CD4-positive, alpha-beta T cell (primary cell): ENCODE measurements at regions of chr19 and their contacts with region 1.

Region 1: DNA sequence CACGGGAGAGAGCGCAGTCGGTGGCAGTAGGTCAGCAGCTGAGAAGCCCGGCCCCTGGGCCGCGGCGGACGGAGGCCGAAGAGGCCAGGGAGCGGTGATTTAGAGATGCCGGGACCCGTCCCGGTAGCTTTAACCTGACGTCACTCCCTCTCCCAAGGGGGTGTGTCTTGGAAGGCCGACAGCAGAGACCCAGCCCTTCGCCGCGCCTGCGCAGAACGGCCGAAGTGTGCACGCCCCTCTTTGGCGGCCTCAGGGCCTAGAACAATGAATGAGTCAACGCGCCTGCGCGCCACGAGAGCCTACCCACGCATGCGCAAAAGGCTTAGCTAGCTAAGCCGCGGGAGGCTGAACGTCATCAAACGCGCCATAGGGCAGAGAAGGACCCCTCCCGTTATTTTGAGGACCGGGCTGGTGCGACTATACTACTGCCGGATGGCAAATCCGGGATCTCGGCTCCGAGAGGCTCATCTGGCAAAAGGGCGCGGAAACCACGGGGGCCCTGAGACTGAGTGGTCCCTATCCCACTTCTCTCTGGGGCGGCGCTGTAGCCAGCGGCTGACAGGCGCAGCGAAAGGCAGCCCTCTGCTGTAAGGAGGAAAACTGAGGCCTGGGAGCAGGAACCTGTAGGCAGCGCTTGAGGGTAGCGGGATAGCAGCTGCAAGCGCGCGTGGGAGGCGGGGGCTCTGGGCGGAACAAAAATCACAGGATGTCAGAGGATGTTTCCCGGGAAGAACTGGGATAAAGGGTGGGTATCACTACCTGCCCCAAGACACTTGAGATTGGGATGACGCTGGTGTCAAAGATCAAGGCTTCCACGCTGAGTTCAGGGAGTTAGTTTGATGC is at the starts of genes IRGQ and ZNF576:
- DNase-seq: peak; percentile 99 to 100 (median 100)
- ATAC-seq: peak; percentile 73
- H3K4me3 ChIP-seq: peak within 1 kb of the TSS; percentile 73
- H3K4me3 Mint-ChIP-seq: peak within 1 kb of the TSS; percentile 96
- H3K27ac ChIP-seq: peak within 1 kb of the TSS; percentile 97
- H3K27ac Mint-ChIP-seq: peak within 1 kb of the TSS; percentile 100
- H3K4me1 ChIP-seq: peaks cover 44% of the 10 kb centered on the region
- H3K4me1 Mint-ChIP-seq: peaks cover 44% of the 10 kb centered on the region
- H3K27me3 ChIP-seq: no peaks in the 10 kb centered on the region
- H3K27me3 Mint-ChIP-seq: no peaks in the 10 kb centered on the region
- CTCF ChIP-seq: no peak
- total RNA-seq, gene IRGQ: 28.9 to 29.8 TPM
- total RNA-seq, gene ZNF576: 4.1 to 4.8 TPM

Region 2: GRCh38 chr19:43463381-43464136 is 132.7 kb before region 1 on chr19:
- CTCF ChIA-PET with region 1: interaction called, 8 read pairs
- POLR2A ChIA-PET with region 1: interaction called, 7 read pairs
- intact Hi-C with region 1: loop called in 1 of 2 experiments (anchors 5 kb)
- DNase-seq: peak; percentile 99 to 100 (median 100)
- ATAC-seq: peak; percentile 77
- H3K4me3 ChIP-seq: peak overlapping the region; percentile 88
- H3K4me3 Mint-ChIP-seq: peak overlapping the region; percentile 95
- H3K27ac ChIP-seq: peak overlapping the region; percentile 85 to 88
- H3K27ac Mint-ChIP-seq: peak overlapping the region; percentile 97
- H3K4me1 ChIP-seq: peaks cover 50% of the 10 kb centered on the region
- H3K4me1 Mint-ChIP-seq: peaks cover 67% of the 10 kb centered on the region
- H3K27me3 ChIP-seq: no peaks in the 10 kb centered on the region
- H3K27me3 Mint-ChIP-seq: no peaks in the 10 kb centered on the region
- CTCF ChIP-seq: no peak

Region 3: DNA sequence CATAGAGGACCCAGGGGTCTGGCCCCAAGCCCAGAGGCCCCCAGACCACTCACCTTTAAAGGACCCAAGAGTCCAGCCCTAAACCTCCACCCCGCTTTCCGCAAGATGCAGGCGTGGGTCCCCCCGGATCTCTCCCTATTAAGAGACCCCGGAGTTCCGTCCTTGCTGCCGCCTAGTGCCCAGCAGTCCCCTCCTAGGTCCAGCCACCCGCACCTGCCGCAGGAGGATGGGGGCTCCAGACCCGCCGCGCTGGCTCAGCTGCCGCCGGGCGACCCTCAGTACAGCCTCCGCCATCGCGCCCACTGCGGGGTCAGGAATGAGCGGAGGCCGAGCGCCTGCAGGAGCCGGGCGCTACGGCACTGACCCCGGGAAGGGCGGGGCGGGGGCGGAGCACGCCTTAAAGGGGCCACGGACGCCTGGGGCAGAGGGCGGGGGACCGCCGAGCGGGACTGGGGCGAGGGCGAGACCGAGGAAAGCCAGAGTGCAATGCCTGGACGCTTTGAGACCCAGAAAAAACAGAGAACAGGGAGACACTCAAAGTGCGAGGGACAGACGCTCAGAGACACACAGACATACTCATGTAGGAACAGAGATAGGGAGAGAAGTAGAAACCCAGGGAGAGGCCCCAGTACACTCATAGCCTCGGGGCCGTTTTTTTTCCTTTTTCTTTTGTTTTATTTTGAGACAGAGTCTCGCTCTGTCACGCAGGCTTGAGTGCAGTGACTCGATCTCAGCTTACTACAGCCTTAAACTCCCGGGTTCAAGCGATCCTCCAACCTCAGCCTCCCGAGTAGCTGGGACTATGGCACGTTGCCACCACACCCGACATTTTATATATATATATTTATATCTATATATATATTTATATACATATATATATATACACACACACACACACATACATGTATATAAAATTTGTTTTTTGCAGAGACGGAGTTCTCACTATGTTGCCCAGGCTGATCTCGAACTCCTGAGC is 69.0 kb before region 1 on chr19 and contains the start of gene ETHE1:
- CTCF ChIA-PET with region 1: interaction called, 23 read pairs
- POLR2A ChIA-PET with region 1: interaction called, 35 read pairs
- intact Hi-C with region 1: loop called in 1 of 2 experiments (anchors 2 kb)
- DNase-seq: peak; percentile 30 to 81 (median 68)
- ATAC-seq: peak; percentile 67
- H3K4me3 ChIP-seq: peak within 1 kb of the TSS; percentile 93
- H3K4me3 Mint-ChIP-seq: peak within 1 kb of the TSS; percentile 77
- H3K27ac ChIP-seq: peak within 1 kb of the TSS; percentile 66 to 73
- H3K27ac Mint-ChIP-seq: peak within 1 kb of the TSS; percentile 76
- H3K4me1 ChIP-seq: peaks cover 32% of the 10 kb centered on the region
- H3K4me1 Mint-ChIP-seq: peaks cover 28% of the 10 kb centered on the region
- H3K27me3 ChIP-seq: no peaks in the 10 kb centered on the region
- H3K27me3 Mint-ChIP-seq: no peaks in the 10 kb centered on the region
- CTCF ChIP-seq: no peak
- total RNA-seq, gene ETHE1: 20.2 to 21.7 TPM

Region 4: GRCh38 chr19:43562698-43563241 is 33.5 kb before region 1 on chr19:
- CTCF ChIA-PET with region 1: interaction called, 31 read pairs
- POLR2A ChIA-PET with region 1: interaction called, 40 read pairs
- intact Hi-C with region 1: no loop called
- DNase-seq: peak; percentile 56 to 96 (median 74)
- ATAC-seq: peak; percentile 89
- H3K4me3 ChIP-seq: peak overlapping the region; percentile 47
- H3K4me3 Mint-ChIP-seq: peak overlapping the region; percentile 85
- H3K27ac ChIP-seq: peak overlapping the region; percentile 82 to 93
- H3K27ac Mint-ChIP-seq: peak overlapping the region; percentile 96
- H3K4me1 ChIP-seq: peaks cover 50% of the 10 kb centered on the region
- H3K4me1 Mint-ChIP-seq: peaks cover 62% of the 10 kb centered on the region
- H3K27me3 ChIP-seq: no peaks in the 10 kb centered on the region
- H3K27me3 Mint-ChIP-seq: no peaks in the 10 kb centered on the region
- CTCF ChIP-seq: no peak

Region 5: DNA sequence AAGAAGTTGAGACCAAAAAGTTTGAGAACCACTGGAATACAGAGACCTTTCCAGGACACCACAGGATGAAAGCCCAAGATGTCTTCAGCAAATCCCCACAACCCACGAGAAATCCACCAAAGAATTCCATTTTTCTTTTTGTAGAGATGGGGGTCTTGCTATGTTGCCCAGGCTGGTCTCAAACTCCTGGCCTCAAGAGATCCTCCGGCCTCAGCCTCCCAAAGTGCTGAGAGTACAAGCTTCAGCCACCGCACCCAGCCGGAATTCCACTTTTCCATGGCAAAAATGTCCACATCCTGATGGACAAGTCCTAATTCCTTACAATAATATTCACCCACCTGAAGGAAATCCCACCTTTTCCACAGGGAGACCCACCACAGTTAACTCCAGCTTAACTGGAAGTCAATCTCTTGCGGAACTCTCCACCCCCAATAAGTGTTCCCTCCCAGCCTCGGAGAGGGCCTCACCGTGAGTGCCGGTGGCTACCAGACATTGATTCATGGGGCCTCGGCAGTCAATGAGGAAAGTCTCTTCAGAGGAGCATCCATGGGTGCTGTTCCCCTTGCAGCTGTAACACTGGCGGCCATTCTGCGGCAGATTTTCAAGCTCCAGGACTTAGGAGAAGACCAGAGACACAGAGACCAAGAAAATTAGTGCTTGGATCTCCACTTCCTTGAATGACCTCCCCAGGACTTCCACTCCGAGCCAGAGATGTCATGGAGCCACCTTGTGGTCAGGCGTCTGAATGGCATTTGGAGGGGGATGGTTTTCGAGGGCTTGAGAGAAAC is 55.7 kb after region 1 on chr19:
- CTCF ChIA-PET with region 1: no interaction called
- POLR2A ChIA-PET with region 1: no interaction called
- intact Hi-C with region 1: loop called in 1 of 2 experiments (anchors 5 kb)
- DNase-seq: peak in 8 of 14 experiments; percentile 5 to 72 (median 40)
- ATAC-seq: peak; percentile 32
- H3K4me3 ChIP-seq: no peak overlapping the region
- H3K4me3 Mint-ChIP-seq: no peak overlapping the region
- H3K27ac ChIP-seq: no peak overlapping the region
- H3K27ac Mint-ChIP-seq: no peak overlapping the region
- H3K4me1 ChIP-seq: no peaks in the 10 kb centered on the region
- H3K4me1 Mint-ChIP-seq: no peaks in the 10 kb centered on the region
- H3K27me3 ChIP-seq: no peaks in the 10 kb centered on the region
- H3K27me3 Mint-ChIP-seq: no peaks in the 10 kb centered on the region
- CTCF ChIP-seq: peak; percentile 58